Right cardiac atrium (tissue), 5 donors: ENCODE measurements at regions of chr1 and their contacts with region 1.

Region 1: GRCh38 chr1:101228424-101229134 is 8.2 kb upstream of the S1PR1 start:
- DNase-seq: no peak
- ATAC-seq: no peak
- H3K4me3 ChIP-seq: no peak overlapping the region
- H3K27ac ChIP-seq: no peak overlapping the region
- H3K4me1 ChIP-seq: no peaks in the 10 kb centered on the region
- H3K27me3 ChIP-seq: no peaks in the 10 kb centered on the region

Region 2: DNA sequence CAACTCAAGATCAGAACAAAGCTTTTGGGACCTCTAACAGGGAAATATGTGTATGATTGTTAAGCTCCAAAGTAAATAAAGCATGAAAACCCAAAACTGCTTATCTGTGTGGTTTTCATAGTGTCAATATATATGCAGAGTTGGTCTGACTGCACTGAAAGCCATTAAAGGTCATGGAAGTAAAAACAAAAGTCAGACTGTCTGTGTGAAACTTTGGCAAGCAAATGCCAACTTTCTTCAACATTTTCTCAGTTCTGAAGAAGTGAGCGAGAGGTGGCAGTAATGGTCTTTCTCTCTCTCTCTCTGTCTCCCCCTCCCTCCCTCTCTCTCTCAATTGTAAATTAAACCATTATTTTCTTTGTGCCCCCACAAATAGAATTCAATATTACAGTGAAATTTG is 91.8 kb before region 1 on chr1:
- intact Hi-C with region 1: loop called in 2 of 4 experiments (anchors 2 to 10 kb)
- DNase-seq: no peak
- ATAC-seq: peak; percentile 62 to 66
- H3K4me3 ChIP-seq: no peak overlapping the region
- H3K27ac ChIP-seq: no peak overlapping the region
- H3K4me1 ChIP-seq: peaks cover 2% of the 10 kb centered on the region
- H3K27me3 ChIP-seq: no peaks in the 10 kb centered on the region

Region 3: GRCh38 chr1:101388904-101389546 is 160.4 kb after region 1 on chr1:
- intact Hi-C with region 1: no loop called
- DNase-seq: no peak
- ATAC-seq: no peak
- H3K4me3 ChIP-seq: no peak overlapping the region
- H3K27ac ChIP-seq: no peak overlapping the region
- H3K4me1 ChIP-seq: no peaks in the 10 kb centered on the region
- H3K27me3 ChIP-seq: no peaks in the 10 kb centered on the region